CD8-positive, alpha-beta memory T cell (primary cell): ENCODE measurements at regions of chr9 and their contacts with region 1.

Region 1: GRCh38 chr9:94065535-94065961 is 18.7 kb upstream of the PTPDC1 start:
- DNase-seq: peak; percentile 47 to 80 (median 63)
- H3K4me3 ChIP-seq: no peak overlapping the region
- H3K4me3 Mint-ChIP-seq: no peak overlapping the region
- H3K27ac ChIP-seq: no peak overlapping the region
- H3K27ac Mint-ChIP-seq: peak overlapping the region in 2 of 8 donors; percentile 14 to 61
- H3K4me1 ChIP-seq: no peaks in the 10 kb centered on the region
- H3K4me1 Mint-ChIP-seq: peaks cover 2 to 7% (median 3%) of the 10 kb centered on the region in 3 donors
- H3K27me3 ChIP-seq: no peaks in the 10 kb centered on the region
- H3K27me3 Mint-ChIP-seq: peaks cover 0 to 2% of the 10 kb centered on the region in 2 donors

Region 2: DNA sequence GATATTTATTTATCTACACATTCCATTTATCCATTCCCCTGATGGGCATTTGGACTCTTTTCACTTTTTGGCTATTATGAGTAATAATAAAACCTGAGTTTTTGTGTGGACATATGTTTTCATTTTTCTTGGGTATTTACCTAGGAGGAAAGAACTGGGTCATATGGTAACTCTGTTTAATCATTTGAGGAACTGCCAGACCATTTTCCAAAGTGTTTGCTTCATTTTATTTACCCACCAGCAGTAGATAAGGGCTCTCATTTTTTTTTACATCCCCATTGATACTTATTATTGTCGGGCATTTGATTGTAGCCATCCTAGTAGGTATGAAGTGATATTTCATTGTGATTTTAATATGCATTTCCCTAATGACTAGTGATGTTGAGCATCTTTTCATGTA is 11.0 kb after region 1 on chr9:
- CTCF ChIA-PET with region 1: interaction called, 12 read pairs
- POLR2A ChIA-PET with region 1: no interaction called
- DNase-seq: no peak
- H3K4me3 ChIP-seq: no peak overlapping the region
- H3K4me3 Mint-ChIP-seq: no peak overlapping the region
- H3K27ac ChIP-seq: no peak overlapping the region
- H3K27ac Mint-ChIP-seq: no peak overlapping the region
- H3K4me1 ChIP-seq: no peaks in the 10 kb centered on the region
- H3K4me1 Mint-ChIP-seq: no peaks in the 10 kb centered on the region
- H3K27me3 ChIP-seq: no peaks in the 10 kb centered on the region
- H3K27me3 Mint-ChIP-seq: no peaks in the 10 kb centered on the region

Region 3: DNA sequence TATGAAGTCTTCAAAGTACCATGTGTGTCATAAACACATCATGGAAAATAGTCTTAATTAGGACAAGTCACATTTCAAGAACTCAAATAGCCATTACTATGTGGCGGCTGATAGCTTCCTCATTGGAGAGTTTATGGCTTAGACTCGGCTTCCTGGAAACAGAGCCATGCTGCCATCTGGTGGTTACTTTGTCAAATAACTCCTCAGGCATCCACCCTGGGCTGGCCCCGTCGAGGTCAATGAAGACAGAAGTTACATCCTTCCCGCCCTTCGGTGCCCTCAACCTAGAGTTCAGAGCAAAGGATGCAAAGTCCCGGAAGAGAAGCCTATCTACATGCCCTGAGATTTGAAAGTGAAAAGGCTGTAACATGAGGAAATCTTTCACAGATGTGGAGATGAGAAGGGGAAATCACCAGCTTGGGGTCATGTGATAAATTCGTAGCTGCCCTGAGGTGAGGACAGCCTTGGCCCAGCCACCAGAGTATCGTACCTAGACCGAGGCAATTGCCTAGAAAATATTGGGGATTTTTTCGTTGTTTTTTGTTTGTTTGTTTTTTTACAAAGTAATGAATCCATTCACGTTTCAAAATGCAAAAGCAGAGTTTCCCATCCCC is 148.1 kb after region 1 on chr9:
- CTCF ChIA-PET with region 1: interaction called, 168 read pairs
- POLR2A ChIA-PET with region 1: no interaction called
- DNase-seq: peak; percentile 44 to 79 (median 63)
- H3K4me3 ChIP-seq: no peak overlapping the region
- H3K4me3 Mint-ChIP-seq: no peak overlapping the region
- H3K27ac ChIP-seq: no peak overlapping the region
- H3K27ac Mint-ChIP-seq: no peak overlapping the region
- H3K4me1 ChIP-seq: no peaks in the 10 kb centered on the region
- H3K4me1 Mint-ChIP-seq: peaks cover 3 to 5% (median 4%) of the 10 kb centered on the region in 3 donors
- H3K27me3 ChIP-seq: peaks cover 4% of the 10 kb centered on the region
- H3K27me3 Mint-ChIP-seq: peaks cover 13 to 51% of the 10 kb centered on the region in 2 donors